Adrenal gland (tissue), 19 donors: ENCODE measurements at regions of chr12 and their contacts with region 1.

Region 1: GRCh38 chr12:6627616-6628015 is 8.1 kb downstream of the LPAR5 start:
- DNase-seq: no peak
- H3K4me3 ChIP-seq: no peak overlapping the region
- H3K27ac ChIP-seq: no peak overlapping the region
- H3K4me1 ChIP-seq: peaks cover 0 to 7% of the 10 kb centered on the region in 2 donors
- H3K27me3 ChIP-seq: no peaks in the 10 kb centered on the region
- CTCF ChIP-seq: no peak
- POLR2A ChIP-seq: no peak

Region 2: DNA sequence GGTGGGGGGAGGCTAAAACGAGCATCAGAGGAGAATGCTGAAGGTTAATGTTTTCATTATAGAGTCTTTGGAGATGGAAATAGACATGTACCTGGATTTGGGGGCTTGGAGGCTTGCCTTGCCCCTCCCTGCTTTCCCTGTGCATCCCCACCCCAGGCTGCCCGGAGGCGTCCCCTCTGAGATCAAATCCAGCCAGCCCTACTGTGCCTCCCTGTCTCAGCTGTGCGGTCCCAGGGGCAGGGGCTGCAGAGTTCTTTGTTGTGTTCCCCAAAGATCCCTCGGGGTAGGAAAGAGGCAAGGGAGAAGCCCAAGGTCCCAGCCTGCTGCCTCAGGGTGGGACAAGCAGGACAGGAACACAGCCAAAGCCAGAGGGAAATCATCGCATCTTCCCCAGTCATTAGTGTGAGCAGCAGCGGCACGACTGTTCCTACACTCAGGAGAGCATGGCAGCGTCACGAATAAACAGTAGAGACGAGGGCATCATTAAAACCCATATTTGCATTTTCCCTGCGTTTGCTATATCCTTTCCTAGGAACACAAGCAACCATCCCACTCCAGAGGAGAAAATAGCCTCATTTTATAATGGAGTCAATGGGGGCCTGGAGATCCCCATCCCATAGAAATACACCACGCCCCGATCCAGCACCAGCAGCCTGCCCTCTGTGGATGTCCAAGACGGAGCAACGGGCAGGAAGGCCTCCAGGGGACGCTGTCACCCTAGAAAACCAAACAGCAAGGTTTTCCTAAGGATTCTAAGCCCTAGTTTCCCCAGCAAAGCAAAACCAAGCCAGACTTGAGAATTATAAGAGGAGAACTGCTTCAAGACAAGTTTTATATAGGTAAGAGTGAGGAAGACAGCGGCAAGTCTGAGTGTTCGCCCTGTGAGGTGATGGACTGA is 714.9 kb before region 1 on chr12:
- intact Hi-C with region 1: no loop called
- DNase-seq: peak in 1 of 7 donors; percentile 14
- H3K4me3 ChIP-seq: no peak overlapping the region
- H3K27ac ChIP-seq: no peak overlapping the region
- H3K4me1 ChIP-seq: no peaks in the 10 kb centered on the region
- H3K27me3 ChIP-seq: no peaks in the 10 kb centered on the region
- CTCF ChIP-seq: no peak
- POLR2A ChIP-seq: no peak

Region 3: DNA sequence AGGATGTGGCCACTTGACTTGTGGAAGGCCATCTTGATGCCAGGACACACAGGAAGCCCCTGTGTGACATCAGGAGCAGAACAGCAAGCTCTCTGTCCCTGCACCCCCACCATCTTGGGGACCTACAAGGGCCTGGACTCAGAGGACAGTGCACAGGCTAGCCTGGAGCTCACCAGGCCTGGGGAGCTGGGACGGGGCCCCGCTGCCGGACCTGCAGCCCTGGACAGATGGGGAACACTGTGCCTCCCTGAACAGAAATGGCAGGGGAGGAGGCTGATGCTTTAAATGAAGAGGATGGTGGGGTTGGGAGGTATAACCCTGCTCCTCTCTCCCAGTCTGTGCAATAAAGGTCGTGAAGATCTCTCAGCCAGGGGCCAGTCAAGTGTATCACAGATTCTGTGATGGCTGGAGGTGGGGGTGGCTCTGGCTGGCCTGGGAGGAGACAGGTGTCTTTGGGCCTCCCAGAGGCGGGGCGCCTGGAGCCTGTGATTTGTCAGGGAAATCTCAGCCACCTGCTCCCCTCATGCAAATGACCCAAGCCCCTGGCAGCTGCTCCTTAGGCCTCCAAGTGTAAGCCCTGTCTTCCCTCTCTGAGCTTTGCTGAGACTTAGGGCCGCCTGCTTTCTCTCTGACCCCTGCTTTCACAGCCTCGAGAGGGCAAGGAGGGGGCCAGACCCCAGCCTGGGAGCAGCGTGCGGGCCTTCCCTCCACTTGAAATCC is 212.0 kb after region 1 on chr12:
- intact Hi-C with region 1: loop called in 1 of 2 experiments (anchors 5 kb)
- DNase-seq: no peak
- H3K4me3 ChIP-seq: no peak overlapping the region
- H3K27ac ChIP-seq: no peak overlapping the region
- H3K4me1 ChIP-seq: no peaks in the 10 kb centered on the region
- H3K27me3 ChIP-seq: no peaks in the 10 kb centered on the region
- CTCF ChIP-seq: no peak
- POLR2A ChIP-seq: no peak

Region 4: DNA sequence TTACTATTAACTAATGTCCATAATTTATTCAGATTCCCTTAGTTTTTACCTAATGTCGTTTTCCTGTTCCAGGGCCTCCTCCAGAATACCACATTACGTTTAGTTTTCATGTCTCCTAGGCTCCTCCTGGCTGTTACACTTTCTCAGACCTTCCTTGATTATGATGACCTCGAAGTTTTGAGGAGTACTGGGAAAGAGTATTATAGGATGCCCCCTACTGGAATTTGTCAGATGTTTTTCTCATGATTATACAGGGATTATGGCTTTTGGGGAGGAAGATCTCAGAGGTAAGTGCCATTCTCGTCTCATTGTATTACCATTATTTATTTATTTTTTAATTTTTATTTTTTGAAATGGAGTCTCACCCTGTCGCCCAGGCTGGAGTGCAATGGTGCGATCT is 415.2 kb after region 1 on chr12:
- intact Hi-C with region 1: no loop called
- DNase-seq: no peak
- H3K4me3 ChIP-seq: no peak overlapping the region
- H3K27ac ChIP-seq: no peak overlapping the region
- H3K4me1 ChIP-seq: peaks cover 0 to 5% of the 10 kb centered on the region in 2 donors
- H3K27me3 ChIP-seq: no peaks in the 10 kb centered on the region
- CTCF ChIP-seq: peak; percentile 13 to 66 (median 55)
- POLR2A ChIP-seq: no peak